CD4-positive, alpha-beta T cell (primary cell): ENCODE measurements at regions of chr9 and their contacts with region 1.

Region 1: DNA sequence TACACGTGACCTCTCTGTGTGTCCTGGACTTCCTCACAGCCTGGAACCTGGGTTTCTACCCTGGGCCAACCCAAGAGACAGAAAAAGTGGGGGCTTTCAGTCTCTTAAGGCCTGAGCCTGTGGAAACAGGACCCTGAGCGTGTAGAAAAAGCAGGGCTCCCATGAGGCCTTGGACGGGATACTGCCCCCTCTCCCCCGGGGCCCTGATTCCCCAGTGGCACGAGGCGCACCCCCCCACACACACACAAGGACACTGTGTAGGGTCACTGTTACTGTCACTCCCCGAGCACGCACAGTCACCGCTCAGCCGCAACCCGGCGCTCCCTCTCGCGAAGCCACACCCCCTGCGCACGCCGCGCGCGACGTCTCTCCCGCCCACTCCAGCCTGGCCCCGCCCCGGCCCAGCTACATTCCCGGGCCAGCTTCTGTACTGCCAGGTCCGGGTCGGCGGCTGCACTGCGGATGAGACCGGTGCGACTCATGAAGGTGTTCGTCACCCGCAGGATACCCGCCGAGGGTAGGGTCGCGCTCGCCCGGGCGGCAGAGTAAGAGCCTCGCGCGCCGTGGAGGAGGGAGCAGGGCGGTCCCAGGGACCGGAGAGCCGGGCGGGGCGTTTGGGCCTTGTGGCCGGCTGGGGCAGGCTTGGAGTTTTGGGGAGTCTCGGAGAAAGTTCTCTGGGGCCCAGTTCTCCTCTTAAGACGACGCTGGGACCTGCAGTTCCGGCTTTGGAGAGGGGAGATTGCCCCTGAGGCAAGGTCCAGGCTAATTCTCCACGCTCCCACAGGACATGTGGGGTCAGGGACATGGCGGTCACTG is at the start of gene GRHPR:
- DNase-seq: peak; percentile 80 to 95 (median 88)
- ATAC-seq: peak; percentile 99
- H3K4me3 ChIP-seq: peak within 1 kb of the TSS; percentile 86
- H3K4me3 Mint-ChIP-seq: peak within 1 kb of the TSS; percentile 96
- H3K27ac ChIP-seq: peak within 1 kb of the TSS; percentile 73 to 80
- H3K27ac Mint-ChIP-seq: peak within 1 kb of the TSS; percentile 90
- H3K4me1 ChIP-seq: peaks cover 34% of the 10 kb centered on the region
- H3K4me1 Mint-ChIP-seq: peaks cover 28% of the 10 kb centered on the region
- H3K27me3 ChIP-seq: no peaks in the 10 kb centered on the region
- H3K27me3 Mint-ChIP-seq: no peaks in the 10 kb centered on the region
- CTCF ChIP-seq: no peak
- total RNA-seq, gene GRHPR: 29.0 to 29.6 TPM

Region 2: DNA sequence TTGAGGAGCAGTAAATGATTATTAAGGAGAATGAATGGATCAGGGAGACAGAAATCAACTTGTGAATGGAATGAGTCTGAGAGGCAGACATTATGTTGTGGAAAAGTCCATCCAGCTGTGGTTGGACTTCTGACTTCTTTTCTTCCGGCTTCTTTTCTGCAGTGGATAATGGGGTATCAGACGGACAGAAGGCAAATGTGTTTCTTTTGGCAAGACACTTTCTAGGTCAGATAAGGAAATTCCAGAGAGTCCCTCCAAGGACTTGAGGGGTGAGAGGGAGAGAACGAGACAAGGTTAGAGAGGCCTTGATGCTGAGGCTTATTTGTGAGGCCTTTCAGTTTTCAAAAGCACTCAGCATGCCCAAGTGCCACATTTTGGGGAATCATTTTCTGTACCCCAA is 17.1 kb before region 1 on chr9:
- CTCF ChIA-PET with region 1: no interaction called
- POLR2A ChIA-PET with region 1: no interaction called
- intact Hi-C with region 1: no loop called
- DNase-seq: no peak
- ATAC-seq: no peak
- H3K4me3 ChIP-seq: no peak overlapping the region
- H3K4me3 Mint-ChIP-seq: no peak overlapping the region
- H3K27ac ChIP-seq: no peak overlapping the region
- H3K27ac Mint-ChIP-seq: no peak overlapping the region
- H3K4me1 ChIP-seq: peaks cover 18% of the 10 kb centered on the region
- H3K4me1 Mint-ChIP-seq: peaks cover 7% of the 10 kb centered on the region
- H3K27me3 ChIP-seq: no peaks in the 10 kb centered on the region
- H3K27me3 Mint-ChIP-seq: no peaks in the 10 kb centered on the region
- CTCF ChIP-seq: no peak

Region 3: DNA sequence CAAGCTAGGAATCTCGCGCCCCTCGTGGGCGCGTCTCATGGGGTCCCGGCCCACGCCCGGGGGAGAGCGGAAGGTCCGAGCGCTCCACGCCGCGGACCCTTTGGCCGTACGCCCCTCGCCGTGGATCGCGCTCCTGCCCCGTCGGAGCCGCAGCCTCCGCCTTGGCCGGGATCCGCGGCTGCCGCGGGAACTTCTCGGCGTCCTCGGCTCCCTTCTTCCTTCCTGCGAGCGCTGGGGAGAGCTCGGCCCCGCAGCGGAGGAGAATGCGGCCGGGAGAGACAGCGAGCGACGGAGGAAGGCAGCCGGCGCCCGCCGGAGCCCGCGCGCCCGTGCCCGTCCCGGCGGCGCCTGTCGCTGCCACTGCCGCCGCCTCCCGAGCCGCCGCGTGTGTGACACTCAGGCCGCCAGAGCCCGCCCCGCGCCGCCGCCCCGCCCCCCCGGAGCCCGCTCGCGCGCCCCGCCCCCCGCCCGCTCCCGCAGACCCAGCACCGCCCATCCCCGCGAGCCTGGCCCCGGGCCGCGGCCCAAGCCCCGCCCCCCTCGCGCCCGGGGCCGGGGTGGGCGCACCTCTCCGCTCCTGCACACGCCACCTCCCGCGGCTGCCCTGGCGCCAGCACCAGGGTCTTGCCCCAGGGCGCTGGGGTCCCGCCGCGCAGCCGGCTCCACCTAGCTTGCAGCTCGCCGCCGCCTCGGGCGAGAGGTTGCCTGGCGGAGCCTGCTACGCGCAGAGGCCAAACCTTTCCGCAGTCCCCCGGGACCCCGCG is 646.6 kb after region 1 on chr9 and contains the start of gene SHB:
- CTCF ChIA-PET with region 1: no interaction called
- POLR2A ChIA-PET with region 1: no interaction called
- intact Hi-C with region 1: loop called in 1 of 2 experiments (anchors 5 kb)
- DNase-seq: peak; percentile 60 to 94 (median 81)
- ATAC-seq: peak; percentile 77
- H3K4me3 ChIP-seq: peak within 1 kb of the TSS; percentile 67
- H3K4me3 Mint-ChIP-seq: peak within 1 kb of the TSS; percentile 87
- H3K27ac ChIP-seq: no peak within 1 kb of the TSS
- H3K27ac Mint-ChIP-seq: peak within 1 kb of the TSS; percentile 29
- H3K4me1 ChIP-seq: peaks cover 26% of the 10 kb centered on the region
- H3K4me1 Mint-ChIP-seq: peaks cover 30% of the 10 kb centered on the region
- H3K27me3 ChIP-seq: no peaks in the 10 kb centered on the region
- H3K27me3 Mint-ChIP-seq: no peaks in the 10 kb centered on the region
- CTCF ChIP-seq: peak; percentile 34
- total RNA-seq, gene SHB: 1.1 to 1.2 TPM